ENCODE measurements at regions of chr12 and their contacts with region 1.

Region 1: GRCh38 chr12:93315907-93316622 is 61.7 kb upstream of the NUDT4 start:
- DNase-seq: no peak
- H3K4me3 ChIP-seq: peak overlapping the region; percentile 59
- H3K27ac ChIP-seq: peak overlapping the region; percentile 87
- H3K4me1 ChIP-seq: peaks cover 55% of the 10 kb centered on the region
- H3K27me3 ChIP-seq: no peaks in the 10 kb centered on the region
- CTCF ChIP-seq: no peak

Region 2: GRCh38 chr12:91413581-91414546 is 1902.2 kb before region 1 on chr12:
- CTCF ChIA-PET with region 1: no interaction called
- POLR2A ChIA-PET with region 1: interaction called, 13 read pairs
- intact Hi-C with region 1: no loop called
- DNase-seq: peak; percentile 21 to 90
- H3K4me3 ChIP-seq: no peak overlapping the region; the same call in 1 of the 2 replicates
- H3K27ac ChIP-seq: peak overlapping the region; percentile 41; the same call in 1 of the 2 replicates
- H3K4me1 ChIP-seq: peaks cover 15% of the 10 kb centered on the region
- H3K27me3 ChIP-seq: no peaks in the 10 kb centered on the region
- CTCF ChIP-seq: no peak

Region 3: GRCh38 chr12:92953747-92954146 is 362.3 kb before region 1 on chr12:
- CTCF ChIA-PET with region 1: no interaction called
- POLR2A ChIA-PET with region 1: interaction called, 10 read pairs
- intact Hi-C with region 1: no loop called
- DNase-seq: no peak
- H3K4me3 ChIP-seq: no peak overlapping the region
- H3K27ac ChIP-seq: no peak overlapping the region
- H3K4me1 ChIP-seq: no peaks in the 10 kb centered on the region
- H3K27me3 ChIP-seq: no peaks in the 10 kb centered on the region
- CTCF ChIP-seq: no peak

Region 4: GRCh38 chr12:93121729-93122488 is 194.2 kb before region 1 on chr12:
- CTCF ChIA-PET with region 1: no interaction called
- POLR2A ChIA-PET with region 1: no interaction called
- intact Hi-C with region 1: no loop called
- DNase-seq: peak in 1 of 2 experiments; percentile 42
- H3K4me3 ChIP-seq: no peak overlapping the region
- H3K27ac ChIP-seq: peak overlapping the region; percentile 75
- H3K4me1 ChIP-seq: peaks cover 18% of the 10 kb centered on the region
- H3K27me3 ChIP-seq: no peaks in the 10 kb centered on the region
- CTCF ChIP-seq: no peak